Gastrocnemius medialis (tissue), 4 donors: ENCODE measurements at regions of chr17 and their contacts with region 1.

Region 1: GRCh38 chr17:57892146-57892828 is 42.4 kb upstream of the MRPS23 start:
- DNase-seq: peak; percentile 77 to 95
- ATAC-seq: peak; percentile 24 to 26
- H3K4me3 ChIP-seq: no peak overlapping the region
- H3K27ac ChIP-seq: peak overlapping the region; percentile 94 to 100 (median 98)
- H3K4me1 ChIP-seq: peaks cover 86 to 90% of the 10 kb centered on the region in 2 donors
- H3K27me3 ChIP-seq: no peaks in the 10 kb centered on the region
- CTCF ChIP-seq: peak; percentile 98 to 99 (median 99)
- POLR2A ChIP-seq: no peak

Region 2: DNA sequence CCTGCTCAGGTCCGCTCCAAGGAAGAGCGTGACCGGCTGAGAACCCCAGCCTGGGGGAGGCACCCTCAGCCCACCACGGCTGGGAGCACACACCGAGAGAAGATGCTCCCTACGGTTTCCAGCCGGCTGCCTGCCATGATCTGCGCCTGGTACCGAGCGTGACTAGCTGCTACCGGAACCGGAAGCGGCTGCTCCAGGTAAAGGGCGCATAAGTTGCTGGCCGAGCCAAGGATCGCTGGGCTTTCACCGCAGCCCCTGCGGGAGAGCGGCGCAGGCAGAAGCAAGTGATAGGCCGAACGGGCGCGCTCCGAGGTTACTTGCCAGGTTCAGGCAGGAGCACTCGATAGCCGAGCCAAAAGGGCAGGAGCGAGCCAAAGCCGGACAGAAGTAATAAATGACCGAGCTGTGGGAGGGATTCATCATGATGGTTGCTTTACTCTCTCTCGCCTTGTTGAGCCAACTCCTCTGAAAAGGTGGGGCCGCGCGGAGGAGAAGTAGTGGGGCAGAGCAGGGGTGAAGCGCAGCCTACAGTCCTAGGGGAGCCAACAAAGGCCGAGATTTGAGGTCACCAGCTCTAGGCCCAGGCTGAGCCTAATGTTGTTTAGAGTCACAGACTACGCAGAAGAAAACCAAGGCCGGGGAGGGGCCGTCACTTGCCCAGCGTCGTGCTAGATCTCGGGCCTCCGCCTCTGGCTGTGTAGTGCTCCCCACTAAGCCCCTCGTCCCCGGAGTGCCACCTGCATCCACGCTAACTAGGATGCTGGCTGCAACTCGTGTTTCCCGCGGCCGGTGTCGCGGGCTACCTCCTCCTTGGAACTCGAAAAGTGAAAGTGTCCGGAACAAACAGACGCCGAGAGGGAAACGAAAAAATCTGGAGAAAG is 42.2 kb before region 1 on chr17 and contains the start of gene MRPS23:
- in situ Hi-C with region 1: no loop called
- intact Hi-C with region 1: loop called (anchors 1 kb)
- DNase-seq: peak; percentile 98 to 99
- ATAC-seq: peak; percentile 63 to 72
- H3K4me3 ChIP-seq: peak within 1 kb of the TSS; percentile 82 to 98 (median 88)
- H3K27ac ChIP-seq: peak within 1 kb of the TSS; percentile 91 to 98 (median 96)
- H3K4me1 ChIP-seq: peaks cover 52% of the 10 kb centered on the region in 2 donors
- H3K27me3 ChIP-seq: no peaks in the 10 kb centered on the region
- CTCF ChIP-seq: peak in 1 of 5 experiments; percentile 9
- POLR2A ChIP-seq: peak; percentile 83 to 87
- total RNA-seq, gene MRPS23: 24.3 to 47.2 (median 35.5) TPM

Region 3: GRCh38 chr17:57939797-57940196 is 47.5 kb after region 1 on chr17:
- in situ Hi-C with region 1: no loop called
- intact Hi-C with region 1: loop called (anchors 2 kb)
- DNase-seq: peak in 1 of 2 donors; percentile 40
- ATAC-seq: peak; percentile 26 to 43
- H3K4me3 ChIP-seq: peak overlapping the region in 2 of 4 donors; percentile 1 to 13
- H3K27ac ChIP-seq: peak overlapping the region; percentile 85 to 94 (median 90)
- H3K4me1 ChIP-seq: peaks cover 88 to 90% of the 10 kb centered on the region in 2 donors
- H3K27me3 ChIP-seq: no peaks in the 10 kb centered on the region
- CTCF ChIP-seq: no peak
- POLR2A ChIP-seq: no peak

Region 4: DNA sequence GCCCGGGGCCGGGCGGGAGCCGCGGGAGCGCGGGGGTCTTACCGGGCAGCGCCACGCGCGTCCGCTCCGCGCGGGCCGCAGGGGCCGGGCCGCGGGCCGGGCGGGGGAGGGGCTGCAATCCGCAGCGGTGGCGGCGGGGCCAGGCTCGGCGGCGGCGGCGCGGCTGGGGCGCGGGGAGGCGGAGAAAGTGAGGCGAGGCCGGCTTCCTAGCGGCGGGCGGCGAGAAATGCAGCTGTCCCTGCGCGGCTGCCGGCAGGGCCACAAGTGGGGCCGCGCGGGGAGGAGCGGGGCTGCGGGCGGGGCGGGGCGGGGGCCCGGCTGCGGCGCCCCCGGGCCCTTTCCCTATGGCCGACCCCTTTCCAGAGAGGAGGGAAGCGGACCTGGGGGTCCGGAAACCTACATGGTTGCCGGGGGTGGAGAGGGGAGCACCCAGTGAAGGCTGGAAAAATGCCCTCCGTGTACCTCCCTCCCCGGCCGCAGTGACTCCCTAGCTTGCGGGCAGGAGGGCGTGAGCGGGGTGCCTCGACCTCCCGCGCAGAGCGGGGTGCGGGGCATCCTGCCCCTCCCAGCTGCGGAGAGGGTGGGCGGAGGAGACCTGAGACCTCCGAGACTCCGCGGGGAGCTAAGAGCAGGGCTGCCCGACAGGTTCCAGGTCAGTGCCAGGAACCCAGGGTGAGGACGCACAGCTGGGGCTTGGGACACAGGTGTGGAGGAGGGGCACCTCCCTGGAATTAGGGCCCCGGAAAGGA is 63.1 kb after region 1 on chr17 and contains the start of gene CUEDC1:
- in situ Hi-C with region 1: no loop called
- intact Hi-C with region 1: loop called (anchors 1 kb)
- DNase-seq: peak; percentile 72 to 79
- ATAC-seq: peak; percentile 69 to 76
- H3K4me3 ChIP-seq: peak within 1 kb of the TSS; percentile 64 to 88 (median 78)
- H3K27ac ChIP-seq: peak within 1 kb of the TSS; percentile 82 to 99 (median 98)
- H3K4me1 ChIP-seq: peaks cover 54 to 58% of the 10 kb centered on the region in 2 donors
- H3K27me3 ChIP-seq: no peaks in the 10 kb centered on the region
- CTCF ChIP-seq: peak in 4 of 5 experiments; percentile 34 to 64 (median 38)
- POLR2A ChIP-seq: peak in 1 of 2 donors; percentile 50
- total RNA-seq, gene CUEDC1: 31.2 to 43.9 (median 34.3) TPM

Region 5: GRCh38 chr17:58267347-58268324 is 375.3 kb after region 1 on chr17:
- in situ Hi-C with region 1: no loop called
- intact Hi-C with region 1: no loop called
- DNase-seq: no peak
- ATAC-seq: no peak
- H3K4me3 ChIP-seq: no peak overlapping the region
- H3K27ac ChIP-seq: no peak overlapping the region
- H3K4me1 ChIP-seq: no peaks in the 10 kb centered on the region
- H3K27me3 ChIP-seq: peaks cover 5 to 13% (median 9%) of the 10 kb centered on the region in 3 donors
- CTCF ChIP-seq: no peak
- POLR2A ChIP-seq: no peak